B cell (primary cell): ENCODE measurements at regions of chr12 and their contacts with region 1.

Region 1: DNA sequence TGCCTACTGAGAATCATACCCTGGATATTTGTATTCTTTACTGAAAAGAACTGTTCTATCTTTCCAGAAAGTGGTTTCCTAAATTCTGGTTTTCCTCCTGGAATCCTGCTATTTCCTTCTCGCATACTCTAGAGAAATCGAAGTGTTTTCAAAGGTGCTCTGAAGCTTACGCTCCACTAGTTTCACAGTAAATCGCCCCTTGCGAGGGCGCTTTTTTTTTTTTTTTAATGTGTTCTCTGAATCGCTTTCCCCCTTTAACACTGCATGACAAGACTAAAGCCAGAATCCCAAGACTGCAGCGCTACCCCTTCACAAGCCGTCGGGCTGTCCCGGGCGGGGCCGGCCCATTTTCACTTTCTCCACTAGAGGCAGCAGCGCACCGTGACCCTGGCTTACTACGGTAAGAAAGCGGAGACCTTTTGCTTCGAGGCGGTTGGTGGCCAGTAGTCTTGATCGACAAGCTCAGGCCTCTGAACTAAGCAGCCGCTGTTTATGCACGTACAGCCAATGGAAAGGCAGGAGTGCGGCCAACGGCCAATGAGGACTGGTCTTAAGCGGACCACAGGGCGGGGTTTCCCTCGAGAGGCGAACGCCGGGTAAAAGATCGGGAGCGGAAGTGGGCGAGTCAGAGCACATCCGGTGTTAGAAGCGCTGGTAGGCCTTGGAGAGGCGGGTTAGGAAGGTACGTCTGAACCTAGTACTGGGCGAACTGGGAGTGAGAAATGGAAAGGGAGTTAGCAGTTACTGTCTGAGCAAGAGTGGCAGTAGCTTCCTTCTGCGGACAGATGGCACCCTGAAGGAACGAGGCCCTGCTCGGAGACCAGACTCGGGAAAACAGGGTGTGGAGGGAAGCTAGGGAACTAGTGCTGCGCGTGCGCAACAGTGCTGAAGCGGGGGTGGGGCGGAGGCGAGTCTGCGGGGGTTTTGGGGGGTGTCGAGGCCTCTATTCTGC is at the start of gene TMBIM6:
- DNase-seq: peak; percentile 99
- ATAC-seq: peak; percentile 93
- H3K4me3 ChIP-seq: peak within 1 kb of the TSS; percentile 66 to 97 (median 87)
- H3K4me3 Mint-ChIP-seq: peak within 1 kb of the TSS; percentile 91
- H3K27ac ChIP-seq: peak within 1 kb of the TSS; percentile 97 to 99
- H3K27ac Mint-ChIP-seq: peak within 1 kb of the TSS; percentile 95
- H3K4me1 ChIP-seq: peaks cover 30 to 34% of the 10 kb centered on the region in 2 donors
- H3K4me1 Mint-ChIP-seq: peaks cover 43% of the 10 kb centered on the region
- H3K27me3 ChIP-seq: no peaks in the 10 kb centered on the region
- H3K27me3 Mint-ChIP-seq: no peaks in the 10 kb centered on the region
- CTCF ChIP-seq: peak; percentile 97
- total RNA-seq, gene TMBIM6: 335 and 336 TPM in 2 replicates

Region 2: DNA sequence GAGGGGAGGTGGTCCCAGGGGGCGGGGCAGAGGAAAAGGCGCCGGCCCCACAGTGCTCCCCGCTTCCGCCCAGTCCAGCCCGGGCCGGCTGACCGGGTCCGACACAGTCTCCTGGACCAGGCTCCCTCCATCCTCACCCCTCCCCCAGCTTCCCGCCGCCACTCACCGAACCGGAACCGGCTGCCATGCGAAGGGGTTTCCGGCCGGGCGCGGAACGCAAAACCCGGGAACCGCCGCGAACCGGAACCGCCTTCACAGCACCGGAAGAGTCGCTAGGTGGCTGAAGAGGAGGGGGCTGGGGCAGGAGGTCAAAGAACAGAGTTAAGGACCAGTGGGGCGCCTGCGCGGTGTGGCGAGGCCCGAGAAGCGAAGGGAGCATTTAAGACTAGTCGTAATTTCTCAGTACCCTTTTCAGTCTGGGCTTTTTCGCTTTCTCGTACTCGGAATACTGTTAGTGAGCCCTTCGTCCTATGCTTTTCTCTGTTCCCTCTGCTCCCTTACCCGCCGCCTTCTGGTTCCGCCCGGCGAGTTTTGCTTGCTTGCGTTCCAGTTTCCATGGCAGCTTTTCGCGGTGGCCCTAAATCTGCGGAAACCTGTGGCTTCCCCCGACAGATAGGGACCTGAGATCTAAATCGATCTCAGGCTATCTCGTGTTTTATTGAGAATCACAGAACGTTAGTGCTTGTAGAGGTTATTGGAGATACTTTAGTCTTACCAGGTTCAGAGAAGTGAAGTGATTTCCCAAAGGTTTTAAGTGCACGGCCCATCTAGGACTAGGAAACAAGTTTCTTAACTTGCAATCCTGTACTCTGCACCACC is 1635.1 kb before region 1 on chr12 and contains the start of gene SENP1:
- CTCF ChIA-PET with region 1: no interaction called
- POLR2A ChIA-PET with region 1: no interaction called
- intact Hi-C with region 1: loop called (anchors 10 kb)
- DNase-seq: peak; percentile 96
- ATAC-seq: peak; percentile 78
- H3K4me3 ChIP-seq: peak within 1 kb of the TSS; percentile 61 to 94 (median 80)
- H3K4me3 Mint-ChIP-seq: peak within 1 kb of the TSS; percentile 89
- H3K27ac ChIP-seq: peak within 1 kb of the TSS; percentile 93 to 99
- H3K27ac Mint-ChIP-seq: peak within 1 kb of the TSS; percentile 95
- H3K4me1 ChIP-seq: peaks cover 20% of the 10 kb centered on the region in 2 donors
- H3K4me1 Mint-ChIP-seq: peaks cover 38% of the 10 kb centered on the region
- H3K27me3 ChIP-seq: no peaks in the 10 kb centered on the region
- H3K27me3 Mint-ChIP-seq: no peaks in the 10 kb centered on the region
- CTCF ChIP-seq: peak; percentile 28
- total RNA-seq, gene SENP1: 43.8 and 44.8 TPM in 2 replicates

Region 3: DNA sequence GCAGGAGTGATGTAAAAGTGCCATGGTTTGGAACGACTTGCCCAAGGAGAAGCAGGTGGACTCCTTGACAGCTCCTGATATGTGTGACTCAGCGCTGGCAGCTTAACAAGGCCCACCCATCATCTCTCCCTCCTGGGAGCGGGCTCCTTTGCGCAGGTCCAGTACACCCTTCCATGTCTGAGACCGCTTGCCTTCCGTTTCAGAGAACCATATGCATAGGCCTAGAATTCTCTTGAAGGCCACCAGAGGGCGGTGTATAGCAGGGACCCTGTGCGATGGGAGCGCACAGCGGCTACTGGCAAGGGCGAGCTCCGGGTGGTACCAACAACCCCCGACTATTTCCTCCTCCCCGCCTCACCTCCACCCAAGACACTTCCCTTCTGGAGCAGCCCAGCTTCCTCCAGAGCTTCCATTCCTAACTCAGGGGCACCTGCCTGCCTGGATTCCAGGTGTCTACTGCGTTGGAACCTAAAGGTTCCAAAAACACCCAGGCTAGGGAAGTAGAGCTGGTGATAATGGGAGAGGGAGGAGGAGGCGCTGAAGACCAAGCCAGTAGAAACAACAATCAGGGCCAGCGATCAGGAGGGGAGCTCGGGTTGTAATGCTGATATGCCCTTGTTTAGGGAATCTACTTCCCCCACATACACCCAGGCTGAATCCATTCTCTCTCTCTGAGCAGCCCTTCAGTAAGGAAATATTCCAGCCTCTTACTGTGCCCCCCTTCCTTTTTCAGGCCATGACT is 652.8 kb before region 1 on chr12:
- CTCF ChIA-PET with region 1: no interaction called
- POLR2A ChIA-PET with region 1: no interaction called
- intact Hi-C with region 1: no loop called
- DNase-seq: peak; percentile 88
- ATAC-seq: peak; percentile 92
- H3K4me3 ChIP-seq: peak overlapping the region in 1 of 5 experiments; percentile 10
- H3K4me3 Mint-ChIP-seq: peak overlapping the region; percentile 70
- H3K27ac ChIP-seq: no peak overlapping the region
- H3K27ac Mint-ChIP-seq: no peak overlapping the region
- H3K4me1 ChIP-seq: peaks cover 47 to 48% of the 10 kb centered on the region in 2 donors
- H3K4me1 Mint-ChIP-seq: peaks cover 38% of the 10 kb centered on the region
- H3K27me3 ChIP-seq: peaks cover 0 to 57% (median 37%) of the 10 kb centered on the region in 4 experiments
- H3K27me3 Mint-ChIP-seq: peaks cover 46% of the 10 kb centered on the region
- CTCF ChIP-seq: peak; percentile 96

Region 4: GRCh38 chr12:49322708-49323523 is 418.3 kb before region 1 on chr12 and contains the start of gene TROAP:
- CTCF ChIA-PET with region 1: no interaction called
- POLR2A ChIA-PET with region 1: no interaction called
- intact Hi-C with region 1: loop called (anchors 1 kb)
- DNase-seq: peak; percentile 98
- ATAC-seq: peak; percentile 99
- H3K4me3 ChIP-seq: peak within 1 kb of the TSS; percentile 66 to 85 (median 70)
- H3K4me3 Mint-ChIP-seq: peak within 1 kb of the TSS; percentile 99
- H3K27ac ChIP-seq: peak within 1 kb of the TSS; percentile 40 to 74
- H3K27ac Mint-ChIP-seq: peak within 1 kb of the TSS; percentile 85
- H3K4me1 ChIP-seq: peaks cover 12 to 18% of the 10 kb centered on the region in 2 donors
- H3K4me1 Mint-ChIP-seq: peaks cover 23% of the 10 kb centered on the region
- H3K27me3 ChIP-seq: no peaks in the 10 kb centered on the region
- H3K27me3 Mint-ChIP-seq: no peaks in the 10 kb centered on the region
- CTCF ChIP-seq: no peak
- total RNA-seq, gene TROAP: 1.0 and 1.7 TPM in 2 replicates

Region 5: GRCh38 chr12:49623142-49623904 is 117.9 kb before region 1 on chr12 and contains the start of gene PRPF40B:
- CTCF ChIA-PET with region 1: interaction called, 10 read pairs
- POLR2A ChIA-PET with region 1: interaction called, 6 read pairs
- intact Hi-C with region 1: loop called (anchors 1 kb)
- DNase-seq: peak; percentile 92
- ATAC-seq: peak; percentile 85
- H3K4me3 ChIP-seq: peak within 1 kb of the TSS; percentile 56 to 85 (median 73)
- H3K4me3 Mint-ChIP-seq: peak within 1 kb of the TSS; percentile 94
- H3K27ac ChIP-seq: peak within 1 kb of the TSS; percentile 56 to 65
- H3K27ac Mint-ChIP-seq: peak within 1 kb of the TSS; percentile 91
- H3K4me1 ChIP-seq: peaks cover 11 to 21% of the 10 kb centered on the region in 2 donors
- H3K4me1 Mint-ChIP-seq: peaks cover 19% of the 10 kb centered on the region
- H3K27me3 ChIP-seq: no peaks in the 10 kb centered on the region
- H3K27me3 Mint-ChIP-seq: no peaks in the 10 kb centered on the region
- CTCF ChIP-seq: peak; percentile 51
- total RNA-seq, gene PRPF40B: 23.6 and 23.7 TPM in 2 replicates

Region 6: DNA sequence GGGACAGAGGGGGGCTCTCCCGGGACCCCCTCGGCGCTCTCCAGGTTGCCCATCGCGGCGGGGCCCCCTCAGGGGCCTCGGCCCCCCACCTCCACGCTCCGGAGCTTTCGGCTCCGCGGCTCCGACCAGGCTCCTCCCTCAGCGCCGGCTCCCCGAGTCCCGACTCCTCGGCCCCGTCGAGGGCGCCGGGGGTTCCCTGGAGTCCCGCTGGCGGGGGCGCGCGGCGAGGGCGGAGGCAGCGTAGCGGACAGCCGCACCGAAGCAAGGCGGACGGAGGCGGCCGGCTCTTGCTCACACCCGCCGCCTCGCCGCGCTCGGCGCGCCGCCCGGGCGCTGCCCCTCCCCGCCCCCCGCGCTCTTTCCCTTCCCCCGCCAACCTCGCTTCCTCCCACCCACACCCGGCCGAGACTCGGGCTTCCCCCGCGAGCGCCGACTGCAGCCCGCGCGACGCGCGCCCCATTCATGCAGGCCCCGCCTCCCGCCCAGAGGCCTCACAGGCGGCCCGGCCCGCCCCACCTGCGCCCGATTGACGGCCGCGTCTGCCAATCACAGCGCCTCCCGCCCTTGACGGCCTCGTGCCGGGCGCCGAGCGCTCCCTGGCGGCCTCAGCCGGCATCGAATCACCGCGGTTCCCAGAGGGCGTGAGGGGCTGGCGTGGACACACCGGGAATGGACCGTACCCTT is 33.9 kb before region 1 on chr12 and contains the start of gene FMNL3:
- CTCF ChIA-PET with region 1: interaction called, 7 read pairs
- POLR2A ChIA-PET with region 1: interaction called, 8 read pairs
- intact Hi-C with region 1: loop called (anchors 1 kb)
- DNase-seq: peak; percentile 99
- ATAC-seq: peak; percentile 92
- H3K4me3 ChIP-seq: peak within 1 kb of the TSS; percentile 47 to 89 (median 84)
- H3K4me3 Mint-ChIP-seq: peak within 1 kb of the TSS; percentile 97
- H3K27ac ChIP-seq: peak within 1 kb of the TSS; percentile 86 to 88
- H3K27ac Mint-ChIP-seq: peak within 1 kb of the TSS; percentile 94
- H3K4me1 ChIP-seq: peaks cover 34 to 49% of the 10 kb centered on the region in 2 donors
- H3K4me1 Mint-ChIP-seq: peaks cover 47% of the 10 kb centered on the region
- H3K27me3 ChIP-seq: peaks cover 0 to 4% (median 2%) of the 10 kb centered on the region in 4 experiments
- H3K27me3 Mint-ChIP-seq: peaks cover 4% of the 10 kb centered on the region
- CTCF ChIP-seq: peak; percentile 93
- total RNA-seq, gene FMNL3: 69.9 and 73.7 TPM in 2 replicates

Region 7: GRCh38 chr12:49776413-49776812 is 35.2 kb after region 1 on chr12:
- CTCF ChIA-PET with region 1: interaction called, 41 read pairs
- POLR2A ChIA-PET with region 1: interaction called, 8 read pairs
- intact Hi-C with region 1: loop called (anchors 1 kb)
- DNase-seq: peak; percentile 63
- ATAC-seq: peak; percentile 73
- H3K4me3 ChIP-seq: no peak overlapping the region
- H3K4me3 Mint-ChIP-seq: no peak overlapping the region
- H3K27ac ChIP-seq: no peak overlapping the region
- H3K27ac Mint-ChIP-seq: no peak overlapping the region
- H3K4me1 ChIP-seq: peaks cover 0 to 10% of the 10 kb centered on the region in 2 donors
- H3K4me1 Mint-ChIP-seq: peaks cover 11% of the 10 kb centered on the region
- H3K27me3 ChIP-seq: peaks cover 0 to 16% (median 5%) of the 10 kb centered on the region in 4 experiments
- H3K27me3 Mint-ChIP-seq: peaks cover 27% of the 10 kb centered on the region
- CTCF ChIP-seq: peak; percentile 70

Region 8: DNA sequence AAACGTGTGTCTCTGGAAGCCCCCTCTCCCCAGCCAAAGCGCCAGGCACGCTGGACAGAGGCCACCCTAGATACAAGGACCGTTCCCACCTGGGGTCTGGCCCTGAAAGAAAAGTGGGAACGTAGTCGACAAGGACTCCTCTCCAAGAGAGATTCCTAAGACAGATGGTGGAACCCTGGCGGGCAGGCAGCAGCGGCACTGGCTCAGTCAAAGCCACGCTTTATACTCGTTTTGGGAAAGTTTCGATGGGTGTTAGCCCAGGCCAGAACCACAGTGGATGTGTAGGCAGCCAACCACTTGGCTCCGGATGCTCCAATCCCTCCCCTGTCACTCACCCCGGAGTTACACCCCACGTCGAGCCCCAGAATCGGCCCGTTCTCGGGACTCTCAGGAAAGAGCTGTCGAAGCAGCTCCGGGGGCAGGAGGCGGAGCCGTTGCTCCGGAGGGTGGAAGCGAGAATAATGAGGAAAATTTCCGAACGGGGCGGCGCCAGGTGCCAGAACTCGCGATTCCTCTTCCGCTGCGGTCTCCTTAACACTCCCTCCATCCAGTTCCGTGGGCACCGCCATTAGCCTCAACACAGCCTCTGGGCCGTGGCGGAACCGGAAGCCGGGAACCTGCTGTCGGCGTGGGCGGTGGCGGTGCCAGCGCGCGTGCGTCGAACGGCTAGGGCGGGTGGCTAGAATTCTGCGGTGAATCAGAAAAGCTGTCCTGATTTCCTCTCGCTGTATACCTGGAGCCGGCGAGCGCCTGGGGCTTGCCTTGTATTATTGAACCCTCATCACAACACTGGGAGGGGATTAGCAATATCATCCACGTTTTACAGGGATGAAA is 101.5 kb after region 1 on chr12 and contains the start of gene BCDIN3D:
- CTCF ChIA-PET with region 1: interaction called, 22 read pairs
- POLR2A ChIA-PET with region 1: interaction called, 11 read pairs
- intact Hi-C with region 1: loop called (anchors 1 kb)
- DNase-seq: peak; percentile 93
- ATAC-seq: peak; percentile 93
- H3K4me3 ChIP-seq: peak within 1 kb of the TSS; percentile 70 to 99 (median 97)
- H3K4me3 Mint-ChIP-seq: peak within 1 kb of the TSS; percentile 94
- H3K27ac ChIP-seq: peak within 1 kb of the TSS; percentile 78 to 80
- H3K27ac Mint-ChIP-seq: peak within 1 kb of the TSS; percentile 96
- H3K4me1 ChIP-seq: peaks cover 12 to 28% of the 10 kb centered on the region in 2 donors
- H3K4me1 Mint-ChIP-seq: peaks cover 29% of the 10 kb centered on the region
- H3K27me3 ChIP-seq: no peaks in the 10 kb centered on the region
- H3K27me3 Mint-ChIP-seq: no peaks in the 10 kb centered on the region
- CTCF ChIP-seq: no peak
- total RNA-seq, gene BCDIN3D: 14.7 and 17.4 TPM in 2 replicates

Region 9: DNA sequence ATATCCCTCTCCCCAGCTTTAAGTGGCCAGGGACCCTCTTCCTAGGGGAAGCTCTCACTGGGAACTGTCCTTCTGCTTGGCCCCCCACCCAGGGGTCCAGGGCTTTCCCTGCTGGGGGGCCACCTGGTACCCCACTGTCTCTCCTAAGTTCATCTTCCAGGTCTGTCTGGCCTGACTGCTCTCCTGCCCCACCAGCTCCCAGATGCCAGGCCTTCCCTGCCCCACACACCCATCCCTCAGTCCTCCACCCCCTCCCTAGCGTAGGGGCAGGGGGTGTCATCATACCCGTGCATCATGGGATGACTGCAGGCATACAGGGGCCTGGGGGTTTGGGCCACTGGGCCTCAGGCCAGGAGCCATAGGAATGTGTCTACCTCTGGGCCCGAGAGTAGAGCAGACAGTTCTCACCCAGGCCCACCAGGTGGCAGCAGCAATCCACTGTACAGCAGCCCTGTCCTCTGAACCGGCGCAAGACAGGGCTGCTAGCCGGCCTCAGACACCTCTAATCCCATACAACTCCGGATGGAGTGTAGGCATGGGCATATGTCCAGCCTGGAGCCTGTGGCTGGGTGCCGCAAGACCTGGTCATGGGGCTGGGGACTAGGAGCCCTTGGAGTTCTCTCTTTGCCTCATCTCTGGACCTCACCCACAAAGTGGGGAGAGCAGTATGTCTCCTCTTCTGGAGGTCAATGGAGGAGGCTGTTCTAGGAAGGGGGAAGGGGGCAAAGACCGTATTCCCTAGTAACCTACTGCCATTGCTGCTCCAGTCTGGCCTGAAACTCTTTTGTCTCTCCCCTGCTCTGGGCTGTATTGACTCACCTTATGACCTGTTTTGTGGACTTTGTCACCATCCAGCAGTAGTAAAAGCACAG is 334.0 kb after region 1 on chr12:
- CTCF ChIA-PET with region 1: no interaction called
- POLR2A ChIA-PET with region 1: no interaction called
- intact Hi-C with region 1: no loop called
- DNase-seq: peak; percentile 87
- ATAC-seq: peak; percentile 97
- H3K4me3 ChIP-seq: no peak overlapping the region
- H3K4me3 Mint-ChIP-seq: no peak overlapping the region
- H3K27ac ChIP-seq: no peak overlapping the region
- H3K27ac Mint-ChIP-seq: no peak overlapping the region
- H3K4me1 ChIP-seq: peaks cover 0 to 12% of the 10 kb centered on the region in 2 donors
- H3K4me1 Mint-ChIP-seq: peaks cover 4% of the 10 kb centered on the region
- H3K27me3 ChIP-seq: no peaks in the 10 kb centered on the region
- H3K27me3 Mint-ChIP-seq: peaks cover 11% of the 10 kb centered on the region
- CTCF ChIP-seq: peak; percentile 95

Region 10: DNA sequence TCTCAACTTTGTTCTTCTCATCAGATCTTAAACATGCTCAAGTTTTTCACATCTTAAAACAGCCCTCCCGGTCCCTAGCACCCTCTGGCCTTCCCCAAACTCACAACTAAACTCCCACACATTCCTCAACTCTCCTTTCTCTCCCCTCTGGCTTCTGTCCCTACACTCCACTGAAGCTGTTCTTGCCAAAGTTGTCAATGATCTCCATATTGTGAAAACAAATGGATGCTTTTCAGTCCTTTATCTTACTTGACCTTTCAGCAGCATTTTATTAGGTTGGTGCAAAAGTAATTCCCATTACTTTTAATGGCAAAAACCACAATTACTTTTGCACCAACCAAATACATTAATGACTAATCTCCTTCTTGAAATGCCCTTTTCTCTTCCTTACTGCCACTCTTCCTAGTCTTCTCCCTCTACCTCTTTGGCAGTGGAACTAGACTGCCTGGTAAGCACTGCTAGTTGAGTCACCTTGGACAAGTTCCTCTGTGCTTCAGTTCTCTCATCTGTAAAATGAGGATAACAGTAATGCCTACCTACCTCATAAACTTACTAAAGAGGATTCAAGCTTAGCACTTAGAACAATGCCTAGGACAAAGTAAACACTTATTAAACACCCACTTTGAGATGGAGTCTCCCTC is 410.0 kb after region 1 on chr12:
- CTCF ChIA-PET with region 1: no interaction called
- POLR2A ChIA-PET with region 1: no interaction called
- intact Hi-C with region 1: no loop called
- DNase-seq: no peak
- ATAC-seq: no peak
- H3K4me3 ChIP-seq: no peak overlapping the region
- H3K4me3 Mint-ChIP-seq: no peak overlapping the region
- H3K27ac ChIP-seq: no peak overlapping the region
- H3K27ac Mint-ChIP-seq: peak overlapping the region; percentile 11
- H3K4me1 ChIP-seq: no peaks in the 10 kb centered on the region
- H3K4me1 Mint-ChIP-seq: peaks cover 6% of the 10 kb centered on the region
- H3K27me3 ChIP-seq: no peaks in the 10 kb centered on the region
- H3K27me3 Mint-ChIP-seq: no peaks in the 10 kb centered on the region
- CTCF ChIP-seq: no peak

Region 11: DNA sequence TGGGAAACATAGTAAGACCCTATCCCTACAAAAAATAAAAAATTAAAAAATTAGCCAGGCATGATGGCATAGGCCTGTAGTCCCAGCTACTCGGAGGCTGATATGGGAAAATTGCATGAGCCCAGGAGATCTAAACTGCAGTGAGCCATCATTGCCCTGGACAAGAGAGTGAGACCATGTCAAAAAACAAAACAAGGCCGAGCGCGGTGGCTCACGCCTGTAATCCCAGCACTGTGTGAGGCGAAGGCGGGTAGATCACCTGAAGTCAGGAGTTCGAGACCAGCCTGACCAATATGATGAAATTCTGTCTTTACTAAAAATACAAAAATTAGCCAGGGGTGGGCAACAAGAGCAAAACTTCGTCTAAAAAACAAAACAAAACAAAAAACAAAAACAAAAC is 603.6 kb after region 1 on chr12:
- CTCF ChIA-PET with region 1: no interaction called
- POLR2A ChIA-PET with region 1: no interaction called
- intact Hi-C with region 1: no loop called
- DNase-seq: no peak
- ATAC-seq: no peak
- H3K4me3 ChIP-seq: no peak overlapping the region
- H3K4me3 Mint-ChIP-seq: no peak overlapping the region
- H3K27ac ChIP-seq: no peak overlapping the region
- H3K27ac Mint-ChIP-seq: no peak overlapping the region
- H3K4me1 ChIP-seq: no peaks in the 10 kb centered on the region
- H3K4me1 Mint-ChIP-seq: no peaks in the 10 kb centered on the region
- H3K27me3 ChIP-seq: no peaks in the 10 kb centered on the region
- H3K27me3 Mint-ChIP-seq: peaks cover 4% of the 10 kb centered on the region
- CTCF ChIP-seq: no peak